ENCODE measurements at regions of chr16 and their contacts with region 1.

Region 1: GRCh38 chr16:11396241-11397048 is 51.2 kb downstream of the RMI2 start:
- DNase-seq: peak; percentile 39
- H3K4me3 ChIP-seq: no peak overlapping the region
- H3K27ac ChIP-seq: no peak overlapping the region
- H3K4me1 ChIP-seq: no peaks in the 10 kb centered on the region
- H3K27me3 ChIP-seq: no peaks in the 10 kb centered on the region
- CTCF ChIP-seq: peak; percentile 95 to 96
- POLR2A ChIP-seq: no peak

Region 2: GRCh38 chr16:11639925-11640899 is 243.8 kb after region 1 on chr16:
- CTCF ChIA-PET with region 1: interaction called, 12 read pairs
- POLR2A ChIA-PET with region 1: no interaction called
- dilution Hi-C with region 1: no loop called
- intact Hi-C with region 1: loop called (anchors 1 kb)
- DNase-seq: peak; percentile 18
- H3K4me3 ChIP-seq: no peak overlapping the region
- H3K27ac ChIP-seq: no peak overlapping the region
- H3K4me1 ChIP-seq: peaks cover 3% of the 10 kb centered on the region
- H3K27me3 ChIP-seq: peaks cover 2% of the 10 kb centered on the region in 2 experiments
- CTCF ChIP-seq: no peak
- POLR2A ChIP-seq: no peak

Region 3: GRCh38 chr16:11816103-11816502 is 419.7 kb after region 1 on chr16:
- CTCF ChIA-PET with region 1: interaction called, 4 read pairs
- POLR2A ChIA-PET with region 1: no interaction called
- dilution Hi-C with region 1: no loop called
- intact Hi-C with region 1: loop called (anchors 1 kb)
- DNase-seq: no peak
- H3K4me3 ChIP-seq: no peak overlapping the region
- H3K27ac ChIP-seq: no peak overlapping the region
- H3K4me1 ChIP-seq: no peaks in the 10 kb centered on the region
- H3K27me3 ChIP-seq: no peaks in the 10 kb centered on the region
- CTCF ChIP-seq: no peak
- POLR2A ChIP-seq: no peak